Heart left ventricle (tissue), 16 donors: ENCODE measurements at regions of chr7 and their contacts with region 1.

Region 1: DNA sequence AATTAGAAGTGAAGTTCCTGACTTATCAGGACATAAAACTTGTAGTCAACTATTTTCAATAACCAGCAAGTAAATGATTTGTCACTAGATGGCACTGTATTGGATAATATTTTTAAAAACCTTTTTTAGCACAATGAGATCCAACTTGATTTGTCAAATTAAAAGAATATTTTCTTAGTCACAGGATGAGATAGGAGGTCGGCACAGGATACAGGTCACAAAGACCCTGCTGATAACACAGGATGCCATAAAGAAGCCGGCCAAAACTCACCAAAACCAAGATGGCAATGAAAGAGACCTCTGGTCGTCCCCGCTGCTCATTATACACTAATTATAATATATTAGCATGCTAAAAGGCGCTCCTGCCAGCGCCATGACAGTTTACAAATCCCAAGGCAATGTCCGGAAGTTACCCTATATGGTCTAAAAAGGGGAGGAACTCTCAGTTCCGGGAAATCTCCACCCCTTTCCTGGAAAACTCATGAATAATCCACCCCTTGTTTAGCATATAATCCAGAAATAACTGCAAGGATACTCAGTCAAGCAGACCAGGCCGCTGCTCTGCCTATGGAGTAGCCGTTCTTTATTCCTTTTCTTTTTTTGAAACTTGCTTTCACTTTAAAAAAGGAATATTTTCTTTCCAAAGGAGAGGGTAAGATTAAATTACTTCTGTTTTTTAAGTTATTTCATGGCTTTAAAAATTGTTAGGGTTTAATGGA is 255.7 kb upstream of the MKLN1 start:
- DNase-seq: peak in 4 of 5 donors; percentile 43 to 83 (median 63)
- ATAC-seq: peak; percentile 39 to 70 (median 62)
- H3K4me3 ChIP-seq: peak overlapping the region in 9 of 12 donors; percentile 14 to 39 (median 21)
- H3K27ac ChIP-seq: peak overlapping the region; percentile 34 to 88 (median 62)
- H3K4me1 ChIP-seq: peaks cover 0 to 87% (median 73%) of the 10 kb centered on the region in 12 donors
- H3K27me3 ChIP-seq: no peaks in the 10 kb centered on the region
- CTCF ChIP-seq: peak; percentile 9 to 65 (median 44)
- POLR2A ChIP-seq: peak in 1 of 2 donors; percentile 20

Region 2: DNA sequence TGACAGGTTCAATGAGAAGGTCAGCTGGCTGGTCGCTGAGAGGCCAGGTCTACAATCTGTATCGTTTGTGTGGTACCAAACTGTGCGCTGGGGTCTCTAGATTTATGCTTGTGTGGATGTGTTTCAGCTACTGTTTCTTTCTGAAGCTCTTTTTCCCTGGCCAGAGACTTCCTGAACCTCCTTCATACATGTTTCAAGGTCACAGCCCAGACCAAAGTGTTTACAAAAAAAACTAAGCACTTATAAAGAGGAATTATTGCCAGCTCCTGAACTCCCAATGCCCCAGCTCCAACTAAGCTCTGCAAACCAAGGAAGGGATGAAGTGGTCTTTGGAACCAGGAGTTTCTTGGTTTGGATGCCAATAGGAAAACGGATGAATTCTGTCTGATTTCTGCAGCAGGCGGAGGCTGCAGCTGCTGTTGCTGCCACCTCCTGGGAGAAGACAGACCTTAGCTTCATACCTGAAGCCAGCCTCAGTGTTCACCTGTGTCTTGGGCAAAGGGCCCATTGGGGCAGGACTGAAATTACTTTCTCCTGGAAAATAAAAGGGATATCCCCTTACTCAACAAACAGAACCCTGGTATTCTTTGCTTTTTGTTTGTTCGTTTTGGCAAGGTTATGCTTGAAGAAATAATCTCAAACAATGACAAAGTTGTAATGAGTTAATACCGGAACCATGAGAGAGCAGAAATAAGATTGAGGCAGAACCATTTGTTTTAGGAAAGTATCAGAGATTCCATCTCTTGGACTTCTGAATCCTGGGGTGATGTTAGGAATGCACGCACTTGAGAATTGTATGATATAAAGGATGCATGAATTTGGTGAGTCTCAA is 231.1 kb after region 1 on chr7:
- intact Hi-C with region 1: loop called in 6 of 10 experiments (anchors 5 to 10 kb)
- DNase-seq: no peak
- ATAC-seq: peak in 3 of 4 donors; percentile 39 to 58 (median 46)
- H3K4me3 ChIP-seq: no peak overlapping the region
- H3K27ac ChIP-seq: peak overlapping the region in 8 of 12 donors; percentile 4 to 72 (median 55)
- H3K4me1 ChIP-seq: peaks cover 0 to 41% (median 22%) of the 10 kb centered on the region in 12 donors
- H3K27me3 ChIP-seq: no peaks in the 10 kb centered on the region
- CTCF ChIP-seq: peak; percentile 34 to 70 (median 56)
- POLR2A ChIP-seq: no peak

Region 3: GRCh38 chr7:131424219-131424822 is 352.4 kb after region 1 on chr7:
- intact Hi-C with region 1: loop called in 8 of 10 experiments (anchors 5 to 10 kb)
- DNase-seq: no peak
- ATAC-seq: peak; percentile 41 to 64 (median 58)
- H3K4me3 ChIP-seq: no peak overlapping the region
- H3K27ac ChIP-seq: peak overlapping the region in 1 of 12 donors; percentile 15
- H3K4me1 ChIP-seq: peaks cover 0 to 27% (median 15%) of the 10 kb centered on the region in 12 donors
- H3K27me3 ChIP-seq: no peaks in the 10 kb centered on the region
- CTCF ChIP-seq: peak; percentile 32 to 73 (median 63)
- POLR2A ChIP-seq: no peak